CD14-positive monocyte (primary cell): ENCODE measurements at regions of chr11 and their contacts with region 1.

Region 1: DNA sequence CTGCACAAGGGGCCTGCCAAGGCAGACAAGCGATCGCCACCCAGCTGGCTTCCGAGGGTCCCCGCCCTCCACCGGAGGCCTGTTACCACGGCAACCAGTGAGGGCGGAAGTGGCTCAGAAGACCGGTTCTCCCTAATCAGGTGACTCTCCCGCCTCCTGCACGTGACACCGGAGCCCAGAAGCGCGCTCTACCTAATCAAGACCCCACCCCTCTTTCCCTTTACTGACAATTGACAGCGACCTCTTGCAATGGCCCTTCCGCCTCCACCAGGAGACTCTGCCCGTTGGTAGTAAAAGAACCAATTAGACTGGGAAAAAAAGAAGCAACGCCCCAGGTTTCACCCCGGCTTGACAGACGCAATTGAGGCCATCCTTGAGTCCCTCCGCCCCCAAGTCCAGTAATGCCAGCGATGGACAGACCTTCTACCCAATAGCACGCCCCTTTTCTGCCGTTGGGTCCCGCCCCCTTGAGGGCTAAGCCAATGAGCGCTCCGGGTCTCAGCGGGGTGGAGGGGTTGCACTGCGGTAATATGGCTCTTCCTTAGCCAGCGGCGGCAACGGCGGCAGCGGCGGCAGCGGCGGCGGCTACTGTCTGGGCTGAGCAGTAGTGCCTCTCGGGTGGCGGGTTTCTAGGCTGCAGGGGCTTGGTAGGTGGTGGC is at the start of gene UVRAG:
- DNase-seq: peak; percentile 98 to 99 (median 98)
- H3K4me3 ChIP-seq: peak within 1 kb of the TSS; percentile 90 to 98 (median 94)
- H3K4me3 Mint-ChIP-seq: peak within 1 kb of the TSS in 1 of 2 donors; percentile 97
- H3K27ac ChIP-seq: peak within 1 kb of the TSS; percentile 86 to 93
- H3K27ac Mint-ChIP-seq: peak within 1 kb of the TSS in 6 of 7 donors; percentile 94 to 98 (median 98)
- H3K4me1 ChIP-seq: peaks cover 54 to 70% of the 10 kb centered on the region in 2 donors
- H3K4me1 Mint-ChIP-seq: peaks cover 53% of the 10 kb centered on the region
- H3K27me3 ChIP-seq: no peaks in the 10 kb centered on the region
- H3K27me3 Mint-ChIP-seq: no peaks in the 10 kb centered on the region
- CTCF ChIP-seq: no peak
- polyA plus RNA-seq, gene UVRAG: 13.7 to 20.5 (median 20.0) TPM

Region 2: GRCh38 chr11:75773595-75774353 is 41.0 kb before region 1 on chr11:
- intact Hi-C with region 1: loop called in 1 of 2 experiments (anchors 5 kb)
- DNase-seq: peak; percentile 86 to 98 (median 92)
- H3K4me3 ChIP-seq: peak overlapping the region in 1 of 3 experiments; percentile 40
- H3K4me3 Mint-ChIP-seq: peak overlapping the region in 1 of 2 donors; percentile 62
- H3K27ac ChIP-seq: peak overlapping the region; percentile 93 to 98
- H3K27ac Mint-ChIP-seq: peak overlapping the region; percentile 88 to 97 (median 94)
- H3K4me1 ChIP-seq: peaks cover 100% of the 10 kb centered on the region in 2 donors
- H3K4me1 Mint-ChIP-seq: peaks cover 96% of the 10 kb centered on the region
- H3K27me3 ChIP-seq: no peaks in the 10 kb centered on the region
- H3K27me3 Mint-ChIP-seq: peaks cover 2 to 12% (median 8%) of the 10 kb centered on the region in 3 donors
- CTCF ChIP-seq: no peak

Region 3: DNA sequence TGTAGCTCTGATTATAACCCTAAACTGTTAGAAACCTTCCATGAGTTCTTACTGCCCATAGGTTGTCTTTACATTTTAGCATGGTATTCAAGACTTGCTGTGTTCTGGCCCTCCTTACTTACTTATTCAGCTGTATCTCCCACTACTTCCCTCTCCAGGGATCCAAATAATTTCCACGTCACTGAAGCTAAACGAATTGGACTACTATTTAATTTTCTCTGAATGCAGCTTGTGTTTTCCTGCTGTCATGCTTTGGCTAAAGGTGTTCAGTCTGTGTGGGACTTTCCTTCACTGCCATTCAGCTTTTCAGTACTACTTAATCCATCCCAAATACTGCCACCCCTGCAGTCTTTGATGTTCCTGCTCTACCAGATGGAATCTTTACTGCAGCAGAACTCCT is 88.5 kb after region 1 on chr11:
- intact Hi-C with region 1: no loop called
- DNase-seq: no peak
- H3K4me3 ChIP-seq: no peak overlapping the region
- H3K4me3 Mint-ChIP-seq: no peak overlapping the region
- H3K27ac ChIP-seq: no peak overlapping the region
- H3K27ac Mint-ChIP-seq: no peak overlapping the region
- H3K4me1 ChIP-seq: peaks cover 12 to 16% of the 10 kb centered on the region in 2 donors
- H3K4me1 Mint-ChIP-seq: peaks cover 21% of the 10 kb centered on the region
- H3K27me3 ChIP-seq: no peaks in the 10 kb centered on the region
- H3K27me3 Mint-ChIP-seq: no peaks in the 10 kb centered on the region
- CTCF ChIP-seq: no peak